ENCODE measurements at regions of chr13 and their contacts with region 1.

Region 1: GRCh38 chr13:108508263-108508662 is 121.1 kb upstream of the MYO16 start:
- DNase-seq: peak; percentile 16
- ATAC-seq: peak; percentile 59
- H3K4me3 ChIP-seq: no peak overlapping the region
- H3K27ac ChIP-seq: no peak overlapping the region
- H3K4me1 ChIP-seq: no peaks in the 10 kb centered on the region
- H3K27me3 ChIP-seq: no peaks in the 10 kb centered on the region
- CTCF ChIP-seq: peak; percentile 42 to 59 (median 47); a peak in 5 of 6 replicates
- POLR2A ChIP-seq: no peak
- RAD21 ChIP-seq: peak; percentile 56

Region 2: GRCh38 chr13:108176685-108177274 is 331.5 kb before region 1 on chr13:
- CTCF ChIA-PET with region 1: no interaction called
- POLR2A ChIA-PET with region 1: no interaction called
- RAD21 ChIA-PET with region 1: no interaction called
- intact Hi-C with region 1: loop called (anchors 5 kb)
- DNase-seq: peak; percentile 36
- ATAC-seq: peak; percentile 78
- H3K4me3 ChIP-seq: no peak overlapping the region
- H3K27ac ChIP-seq: no peak overlapping the region
- H3K4me1 ChIP-seq: no peaks in the 10 kb centered on the region
- H3K27me3 ChIP-seq: no peaks in the 10 kb centered on the region
- CTCF ChIP-seq: peak; percentile 26 to 68 (median 61); a peak in 5 of 6 replicates
- POLR2A ChIP-seq: no peak
- RAD21 ChIP-seq: peak; percentile 28; the same call in 1 of the 2 replicates

Region 3: DNA sequence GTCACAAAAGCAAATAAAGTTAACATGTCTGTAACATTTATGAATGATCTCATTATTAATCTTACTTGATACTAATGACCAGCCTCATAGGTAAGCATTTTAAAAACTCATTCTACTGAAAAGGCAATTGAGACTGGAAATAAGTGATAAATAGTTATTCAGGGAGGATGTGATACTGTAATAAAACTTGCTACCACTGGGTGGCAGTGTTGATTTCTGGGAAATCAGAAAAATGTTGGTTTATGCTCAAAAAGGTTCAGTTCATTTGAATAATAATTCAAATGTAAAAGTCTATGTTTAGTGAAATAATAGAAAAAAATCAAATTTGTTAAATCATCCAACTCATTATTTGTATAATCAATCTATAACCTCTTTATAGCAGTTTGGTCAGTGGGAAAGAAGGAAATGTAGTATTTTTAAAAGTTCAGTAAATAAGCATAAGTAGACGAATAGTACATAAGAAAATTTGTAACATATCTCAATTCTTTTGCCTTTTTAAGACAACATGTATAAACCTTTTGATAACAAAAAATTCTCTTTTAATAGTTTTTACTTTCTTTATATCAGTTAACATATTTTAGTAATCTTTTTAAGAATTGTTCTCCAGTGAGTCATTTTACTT is 280.5 kb before region 1 on chr13:
- CTCF ChIA-PET with region 1: interaction called, 3 read pairs
- POLR2A ChIA-PET with region 1: no interaction called
- RAD21 ChIA-PET with region 1: no interaction called
- intact Hi-C with region 1: loop called (anchors 5 kb)
- DNase-seq: peak; percentile 19
- ATAC-seq: 0 out of 2 replicates have a peak, but pooled peaks have one; percentile 32
- H3K4me3 ChIP-seq: no peak overlapping the region
- H3K27ac ChIP-seq: no peak overlapping the region
- H3K4me1 ChIP-seq: no peaks in the 10 kb centered on the region
- H3K27me3 ChIP-seq: no peaks in the 10 kb centered on the region
- CTCF ChIP-seq: peak in 2 of 3 experiments; percentile 59 to 81; a peak in 4 of 6 replicates
- POLR2A ChIP-seq: no peak
- RAD21 ChIP-seq: peak; percentile 46

Region 4: GRCh38 chr13:108322206-108322824 is 185.9 kb before region 1 on chr13:
- CTCF ChIA-PET with region 1: interaction called, 5 read pairs
- POLR2A ChIA-PET with region 1: no interaction called
- RAD21 ChIA-PET with region 1: no interaction called
- intact Hi-C with region 1: loop called (anchors 5 kb)
- DNase-seq: peak; percentile 28
- ATAC-seq: peak; percentile 88
- H3K4me3 ChIP-seq: no peak overlapping the region
- H3K27ac ChIP-seq: no peak overlapping the region
- H3K4me1 ChIP-seq: no peaks in the 10 kb centered on the region
- H3K27me3 ChIP-seq: peaks cover 51% of the 10 kb centered on the region
- CTCF ChIP-seq: peak; percentile 53 to 87 (median 65); a peak in 5 of 6 replicates
- POLR2A ChIP-seq: no peak
- RAD21 ChIP-seq: peak; percentile 70

Region 5: DNA sequence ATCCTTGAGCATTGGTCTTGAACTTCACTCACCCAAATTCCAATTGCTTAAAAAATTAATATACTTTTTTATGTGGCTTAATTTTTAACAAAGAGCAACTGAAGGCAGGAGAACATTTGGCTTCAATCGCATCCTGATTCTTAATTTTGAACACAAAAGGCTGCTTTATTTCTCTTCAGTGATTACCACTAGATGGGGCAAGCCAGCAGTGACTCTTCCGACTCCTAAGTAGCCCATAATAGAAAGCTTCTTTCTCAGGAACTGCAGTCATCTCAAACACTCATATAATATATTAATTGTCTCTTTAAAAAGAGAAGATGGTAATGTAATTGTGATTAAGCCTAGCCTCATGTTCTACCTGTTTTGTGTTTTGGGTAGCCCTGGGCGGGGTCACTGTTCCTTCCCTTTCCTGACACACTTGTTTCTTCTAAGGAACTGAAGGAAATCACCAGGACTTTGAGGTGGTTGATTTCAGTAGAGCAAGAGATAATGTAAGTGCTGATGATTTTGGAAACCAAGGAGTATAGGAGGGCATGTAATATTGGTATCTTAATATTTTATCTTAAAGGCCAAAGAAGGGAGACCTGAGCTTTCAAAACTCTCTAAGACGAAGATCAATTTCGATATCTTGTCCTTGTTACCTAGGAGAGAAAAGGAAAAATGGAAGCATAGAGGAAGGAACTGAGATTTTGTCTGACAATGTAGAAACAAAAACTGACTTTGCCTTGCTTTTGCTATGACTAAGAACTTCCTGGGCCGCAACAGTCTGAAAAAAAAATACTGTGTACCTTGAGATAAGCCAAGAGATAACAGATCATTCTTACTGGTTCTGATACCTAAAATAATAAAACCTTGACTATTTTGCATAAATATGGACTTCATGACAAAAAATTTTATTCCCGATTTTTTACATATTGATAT is 165.6 kb before region 1 on chr13:
- CTCF ChIA-PET with region 1: interaction called, 9 read pairs
- POLR2A ChIA-PET with region 1: no interaction called
- RAD21 ChIA-PET with region 1: no interaction called
- intact Hi-C with region 1: loop called (anchors 5 kb)
- DNase-seq: peak; percentile 16
- ATAC-seq: peak; percentile 74
- H3K4me3 ChIP-seq: no peak overlapping the region
- H3K27ac ChIP-seq: no peak overlapping the region
- H3K4me1 ChIP-seq: no peaks in the 10 kb centered on the region
- H3K27me3 ChIP-seq: peaks cover 44% of the 10 kb centered on the region
- CTCF ChIP-seq: peak; percentile 53 to 72 (median 63); a peak in 5 of 6 replicates
- POLR2A ChIP-seq: no peak
- RAD21 ChIP-seq: peak; percentile 53

Region 6: DNA sequence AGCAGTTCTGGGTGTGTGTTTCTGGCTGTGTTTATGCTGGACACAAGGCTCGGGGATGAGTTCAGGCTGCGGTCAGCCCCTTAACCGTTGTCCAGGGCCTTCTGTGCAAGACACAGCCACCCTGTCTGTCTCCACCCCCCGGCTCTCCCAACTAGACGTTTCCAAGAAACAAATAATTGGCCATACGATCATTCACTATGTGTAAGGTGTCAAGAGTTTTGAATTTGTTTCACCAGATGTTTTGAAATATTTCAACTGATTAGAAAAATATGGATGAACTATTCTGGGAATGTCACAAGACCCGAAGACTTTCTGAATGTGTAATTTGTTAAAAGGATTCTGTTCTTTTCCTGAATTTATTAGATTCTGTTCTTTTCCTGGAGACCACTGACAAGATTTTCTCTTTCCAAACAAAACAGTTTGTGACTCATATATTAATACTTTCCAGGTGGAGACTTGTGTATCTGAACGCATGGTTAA is 439.3 kb after region 1 on chr13:
- CTCF ChIA-PET with region 1: no interaction called
- POLR2A ChIA-PET with region 1: no interaction called
- RAD21 ChIA-PET with region 1: no interaction called
- intact Hi-C with region 1: no loop called
- DNase-seq: no peak
- ATAC-seq: no peak
- H3K4me3 ChIP-seq: no peak overlapping the region
- H3K27ac ChIP-seq: no peak overlapping the region
- H3K4me1 ChIP-seq: peaks cover 0 to 14% of the 10 kb centered on the region in 2 experiments; a peak in 3 of 4 replicates
- H3K27me3 ChIP-seq: no peaks in the 10 kb centered on the region
- CTCF ChIP-seq: no peak
- POLR2A ChIP-seq: no peak
- RAD21 ChIP-seq: no peak